ENCODE measurements at regions of chr4 and their contacts with region 1.

Region 1: GRCh38 chr4:161252520-161253141 is 911.2 kb downstream of the FSTL5 start:
- DNase-seq: peak in 1 of 2 experiments; percentile 21
- H3K4me3 ChIP-seq: no peak overlapping the region
- H3K4me3 Mint-ChIP-seq: no peak overlapping the region
- H3K27ac Mint-ChIP-seq: no peak overlapping the region
- H3K4me1 ChIP-seq: no peaks in the 10 kb centered on the region
- H3K4me1 Mint-ChIP-seq: no peaks in the 10 kb centered on the region
- H3K27me3 ChIP-seq: no peaks in the 10 kb centered on the region
- H3K27me3 Mint-ChIP-seq: no peaks in the 10 kb centered on the region
- CTCF ChIP-seq: peak; percentile 60 to 68

Region 2: GRCh38 chr4:161132715-161133425 is 119.8 kb before region 1 on chr4:
- CTCF ChIA-PET with region 1: no interaction called
- POLR2A ChIA-PET with region 1: no interaction called
- intact Hi-C with region 1: no loop called
- DNase-seq: no peak
- H3K4me3 ChIP-seq: no peak overlapping the region
- H3K4me3 Mint-ChIP-seq: no peak overlapping the region
- H3K27ac Mint-ChIP-seq: no peak overlapping the region
- H3K4me1 ChIP-seq: no peaks in the 10 kb centered on the region
- H3K4me1 Mint-ChIP-seq: no peaks in the 10 kb centered on the region
- H3K27me3 ChIP-seq: no peaks in the 10 kb centered on the region
- H3K27me3 Mint-ChIP-seq: no peaks in the 10 kb centered on the region
- CTCF ChIP-seq: no peak

Region 3: GRCh38 chr4:161320377-161320776 is 67.7 kb after region 1 on chr4:
- CTCF ChIA-PET with region 1: no interaction called
- POLR2A ChIA-PET with region 1: no interaction called
- intact Hi-C with region 1: loop called (anchors 2 kb)
- DNase-seq: peak; percentile 44 to 46
- H3K4me3 ChIP-seq: no peak overlapping the region
- H3K4me3 Mint-ChIP-seq: no peak overlapping the region
- H3K27ac Mint-ChIP-seq: no peak overlapping the region
- H3K4me1 ChIP-seq: no peaks in the 10 kb centered on the region
- H3K4me1 Mint-ChIP-seq: no peaks in the 10 kb centered on the region
- H3K27me3 ChIP-seq: no peaks in the 10 kb centered on the region
- H3K27me3 Mint-ChIP-seq: no peaks in the 10 kb centered on the region
- CTCF ChIP-seq: peak; percentile 43 to 65

Region 4: GRCh38 chr4:161419822-161420221 is 167.2 kb after region 1 on chr4:
- CTCF ChIA-PET with region 1: no interaction called
- POLR2A ChIA-PET with region 1: no interaction called
- intact Hi-C with region 1: loop called (anchors 1 kb)
- DNase-seq: peak in 1 of 2 experiments; percentile 7
- H3K4me3 ChIP-seq: no peak overlapping the region
- H3K4me3 Mint-ChIP-seq: no peak overlapping the region
- H3K27ac Mint-ChIP-seq: no peak overlapping the region
- H3K4me1 ChIP-seq: no peaks in the 10 kb centered on the region
- H3K4me1 Mint-ChIP-seq: no peaks in the 10 kb centered on the region
- H3K27me3 ChIP-seq: no peaks in the 10 kb centered on the region
- H3K27me3 Mint-ChIP-seq: no peaks in the 10 kb centered on the region
- CTCF ChIP-seq: no peak

Region 5: DNA sequence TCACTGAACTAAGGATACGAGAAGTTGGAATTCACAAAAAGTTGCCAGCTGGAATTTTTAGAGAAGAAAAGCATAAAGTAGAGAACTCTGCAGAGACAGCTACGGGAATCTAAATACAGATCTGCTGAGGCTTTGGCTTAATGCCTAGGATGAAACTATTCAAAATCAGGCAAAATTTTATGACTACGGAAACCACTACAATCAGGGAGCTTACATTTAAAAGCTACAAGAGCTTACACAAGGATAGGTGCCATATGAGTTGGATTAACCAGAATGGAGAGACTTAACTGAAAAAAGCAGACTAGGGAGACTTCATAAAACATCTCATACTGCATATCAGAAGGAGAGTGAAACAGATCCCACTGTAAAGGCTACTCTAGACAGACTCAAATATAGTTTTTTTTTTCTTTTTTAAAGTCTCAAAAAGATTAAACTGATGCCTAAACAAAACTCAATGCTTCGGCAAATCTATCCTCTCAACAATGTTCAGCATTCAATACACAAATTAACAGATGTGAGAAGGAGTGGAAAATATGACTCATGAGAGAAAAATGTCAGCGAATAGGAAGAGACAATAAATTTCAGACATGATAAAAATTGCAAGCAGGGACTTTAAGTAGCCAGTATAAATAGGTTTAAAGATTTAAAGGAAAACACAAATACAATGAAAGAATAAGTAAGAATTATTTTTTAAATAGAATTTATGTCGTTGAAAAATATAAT is 325.1 kb after region 1 on chr4:
- CTCF ChIA-PET with region 1: no interaction called
- POLR2A ChIA-PET with region 1: no interaction called
- intact Hi-C with region 1: loop called (anchors 5 kb)
- DNase-seq: no peak
- H3K4me3 ChIP-seq: no peak overlapping the region
- H3K4me3 Mint-ChIP-seq: no peak overlapping the region
- H3K27ac Mint-ChIP-seq: no peak overlapping the region
- H3K4me1 ChIP-seq: no peaks in the 10 kb centered on the region
- H3K4me1 Mint-ChIP-seq: no peaks in the 10 kb centered on the region
- H3K27me3 ChIP-seq: no peaks in the 10 kb centered on the region
- H3K27me3 Mint-ChIP-seq: no peaks in the 10 kb centered on the region
- CTCF ChIP-seq: no peak

Region 6: GRCh38 chr4:161949946-161950725 is 697.5 kb after region 1 on chr4:
- CTCF ChIA-PET with region 1: no interaction called
- POLR2A ChIA-PET with region 1: no interaction called
- intact Hi-C with region 1: loop called (anchors 10 kb)
- DNase-seq: no peak
- H3K4me3 ChIP-seq: no peak overlapping the region
- H3K4me3 Mint-ChIP-seq: no peak overlapping the region
- H3K27ac Mint-ChIP-seq: no peak overlapping the region
- H3K4me1 ChIP-seq: no peaks in the 10 kb centered on the region
- H3K4me1 Mint-ChIP-seq: no peaks in the 10 kb centered on the region
- H3K27me3 ChIP-seq: no peaks in the 10 kb centered on the region
- H3K27me3 Mint-ChIP-seq: no peaks in the 10 kb centered on the region
- CTCF ChIP-seq: no peak

Region 7: GRCh38 chr4:162163852-162164759 is 911.5 kb after region 1 on chr4 and contains the start of gene FSTL5:
- CTCF ChIA-PET with region 1: no interaction called
- POLR2A ChIA-PET with region 1: no interaction called
- intact Hi-C with region 1: loop called (anchors 10 kb)
- DNase-seq: peak; percentile 76 to 84
- H3K4me3 ChIP-seq: peak within 1 kb of the TSS; percentile 32
- H3K4me3 Mint-ChIP-seq: peak within 1 kb of the TSS; percentile 83
- H3K27ac Mint-ChIP-seq: no peak within 1 kb of the TSS
- H3K4me1 ChIP-seq: no peaks in the 10 kb centered on the region
- H3K4me1 Mint-ChIP-seq: no peaks in the 10 kb centered on the region
- H3K27me3 ChIP-seq: no peaks in the 10 kb centered on the region
- H3K27me3 Mint-ChIP-seq: no peaks in the 10 kb centered on the region
- CTCF ChIP-seq: no peak
- total RNA-seq, gene FSTL5: 1.6 and 1.9 TPM in 2 replicates

Region 8: GRCh38 chr4:162450531-162451035 is 1198.0 kb after region 1 on chr4:
- CTCF ChIA-PET with region 1: no interaction called
- POLR2A ChIA-PET with region 1: no interaction called
- intact Hi-C with region 1: no loop called
- DNase-seq: no peak
- H3K4me3 ChIP-seq: no peak overlapping the region
- H3K4me3 Mint-ChIP-seq: no peak overlapping the region
- H3K27ac Mint-ChIP-seq: no peak overlapping the region
- H3K4me1 ChIP-seq: no peaks in the 10 kb centered on the region
- H3K4me1 Mint-ChIP-seq: no peaks in the 10 kb centered on the region
- H3K27me3 ChIP-seq: no peaks in the 10 kb centered on the region
- H3K27me3 Mint-ChIP-seq: no peaks in the 10 kb centered on the region
- CTCF ChIP-seq: no peak

Measured in Caco-2 (cell line).